GM13977 (cell line): ENCODE measurements at regions of chr1 and their contacts with region 1.

Region 1: GRCh38 chr1:236113324-236114032 is 28.9 kb upstream of the GPR137B start:
- DNase-seq: no peak
- CTCF ChIP-seq: no peak

Region 2: GRCh38 chr1:236489710-236490377 is 376.4 kb after region 1 on chr1:
- in situ Hi-C with region 1: loop called (anchors 10 kb)
- DNase-seq: peak; percentile 68
- CTCF ChIP-seq: peak; percentile 52